Naive thymus-derived CD4-positive, alpha-beta T cell (primary cell): ENCODE measurements at regions of chr19 and their contacts with region 1.

Region 1: GRCh38 chr19:49640113-49640898 is at the start of gene RRAS:
- DNase-seq: peak; percentile 91 to 100 (median 99)
- ATAC-seq: peak; percentile 78
- H3K4me3 ChIP-seq: peak within 1 kb of the TSS; percentile 64
- H3K4me3 Mint-ChIP-seq: peak within 1 kb of the TSS; percentile 86 to 98 (median 93)
- H3K27ac ChIP-seq: peak within 1 kb of the TSS; percentile 95
- H3K27ac Mint-ChIP-seq: peak within 1 kb of the TSS; percentile 93 to 99 (median 99)
- H3K4me1 ChIP-seq: peaks cover 27 to 40% of the 10 kb centered on the region in 2 donors
- H3K4me1 Mint-ChIP-seq: peaks cover 57 to 67% (median 63%) of the 10 kb centered on the region in 7 donors
- H3K27me3 ChIP-seq: no peaks in the 10 kb centered on the region
- H3K27me3 Mint-ChIP-seq: peaks cover 0 to 6% (median 0%) of the 10 kb centered on the region in 5 donors
- total RNA-seq, gene RRAS: 11.0 to 18.6 (median 13.8) TPM

Region 2: GRCh38 chr19:48618916-48619691 is 1021.2 kb before region 1 on chr19 and contains the starts of genes RPL18 and SPHK2:
- CTCF ChIA-PET with region 1: no interaction called
- POLR2A ChIA-PET with region 1: no interaction called
- intact Hi-C with region 1: loop called in 1 of 2 experiments (anchors 10 kb)
- DNase-seq: peak; percentile 89 to 97 (median 95)
- ATAC-seq: peak; percentile 89
- H3K4me3 ChIP-seq: peak within 1 kb of the TSS; percentile 96
- H3K4me3 Mint-ChIP-seq: peak within 1 kb of the TSS; percentile 88 to 99 (median 96)
- H3K27ac ChIP-seq: peak within 1 kb of the TSS; percentile 95
- H3K27ac Mint-ChIP-seq: peak within 1 kb of the TSS; percentile 96 to 99 (median 98)
- H3K4me1 ChIP-seq: peaks cover 26 to 45% of the 10 kb centered on the region in 2 donors
- H3K4me1 Mint-ChIP-seq: peaks cover 40 to 64% (median 54%) of the 10 kb centered on the region in 7 donors
- H3K27me3 ChIP-seq: no peaks in the 10 kb centered on the region
- H3K27me3 Mint-ChIP-seq: no peaks in the 10 kb centered on the region
- total RNA-seq, gene RPL18: 1,570 to 2,826 (median 2,745) TPM
- total RNA-seq, gene SPHK2: 20.1 to 34.7 (median 30.5) TPM

Region 3: GRCh38 chr19:49287141-49287770 is 353.1 kb before region 1 on chr19:
- CTCF ChIA-PET with region 1: no interaction called
- POLR2A ChIA-PET with region 1: no interaction called
- intact Hi-C with region 1: no loop called
- DNase-seq: no peak
- ATAC-seq: no peak
- H3K4me3 ChIP-seq: no peak overlapping the region
- H3K4me3 Mint-ChIP-seq: no peak overlapping the region
- H3K27ac ChIP-seq: no peak overlapping the region
- H3K27ac Mint-ChIP-seq: no peak overlapping the region
- H3K4me1 ChIP-seq: no peaks in the 10 kb centered on the region
- H3K4me1 Mint-ChIP-seq: peaks cover 0 to 2% (median 0%) of the 10 kb centered on the region in 7 donors
- H3K27me3 ChIP-seq: no peaks in the 10 kb centered on the region
- H3K27me3 Mint-ChIP-seq: peaks cover 0 to 4% (median 4%) of the 10 kb centered on the region in 5 donors

Region 4: GRCh38 chr19:49497047-49497788 is 143.1 kb before region 1 on chr19:
- CTCF ChIA-PET with region 1: no interaction called
- POLR2A ChIA-PET with region 1: interaction called, 16 read pairs
- intact Hi-C with region 1: loop called in 1 of 2 experiments (anchors 1 kb)
- DNase-seq: peak; percentile 55 to 85 (median 77)
- ATAC-seq: peak; percentile 20
- H3K4me3 ChIP-seq: peak overlapping the region; percentile 97
- H3K4me3 Mint-ChIP-seq: peak overlapping the region; percentile 96 to 100 (median 99)
- H3K27ac ChIP-seq: peak overlapping the region; percentile 99
- H3K27ac Mint-ChIP-seq: peak overlapping the region; percentile 91 to 100 (median 98)
- H3K4me1 ChIP-seq: peaks cover 21 to 40% of the 10 kb centered on the region in 2 donors
- H3K4me1 Mint-ChIP-seq: peaks cover 32 to 64% (median 50%) of the 10 kb centered on the region in 7 donors
- H3K27me3 ChIP-seq: no peaks in the 10 kb centered on the region
- H3K27me3 Mint-ChIP-seq: peaks cover 0 to 12% (median 0%) of the 10 kb centered on the region in 5 donors

Region 5: GRCh38 chr19:49665351-49666119 is 25.2 kb after region 1 on chr19 and contains the starts of genes BCL2L12 and IRF3:
- CTCF ChIA-PET with region 1: interaction called, 8 read pairs
- POLR2A ChIA-PET with region 1: interaction called, 187 read pairs
- intact Hi-C with region 1: loop called (anchors 1 kb)
- DNase-seq: peak; percentile 99
- ATAC-seq: peak; percentile 90
- H3K4me3 ChIP-seq: peak within 1 kb of the TSS; percentile 95
- H3K4me3 Mint-ChIP-seq: peak within 1 kb of the TSS; percentile 97 to 100 (median 99)
- H3K27ac ChIP-seq: peak within 1 kb of the TSS; percentile 80
- H3K27ac Mint-ChIP-seq: peak within 1 kb of the TSS; percentile 96 to 99 (median 97)
- H3K4me1 ChIP-seq: peaks cover 23% of the 10 kb centered on the region in 2 donors
- H3K4me1 Mint-ChIP-seq: peaks cover 24 to 47% (median 39%) of the 10 kb centered on the region in 7 donors
- H3K27me3 ChIP-seq: no peaks in the 10 kb centered on the region
- H3K27me3 Mint-ChIP-seq: peaks cover 0 to 2% (median 0%) of the 10 kb centered on the region in 5 donors
- total RNA-seq, gene BCL2L12: 11.3 to 57.2 (median 22.6) TPM
- total RNA-seq, gene IRF3: 176 to 346 (median 212) TPM

Region 6: GRCh38 chr19:49817964-49818648 is 177.8 kb after region 1 on chr19 and contains the start of gene MED25:
- CTCF ChIA-PET with region 1: no interaction called
- POLR2A ChIA-PET with region 1: no interaction called
- intact Hi-C with region 1: loop called (anchors 1 to 2 kb)
- DNase-seq: peak; percentile 87 to 96 (median 94)
- ATAC-seq: peak; percentile 65
- H3K4me3 ChIP-seq: peak within 1 kb of the TSS; percentile 91
- H3K4me3 Mint-ChIP-seq: peak within 1 kb of the TSS; percentile 94 to 100 (median 98)
- H3K27ac ChIP-seq: peak within 1 kb of the TSS; percentile 88
- H3K27ac Mint-ChIP-seq: peak within 1 kb of the TSS; percentile 96 to 100 (median 100)
- H3K4me1 ChIP-seq: peaks cover 11 to 17% of the 10 kb centered on the region in 2 donors
- H3K4me1 Mint-ChIP-seq: peaks cover 20 to 51% (median 39%) of the 10 kb centered on the region in 7 donors
- H3K27me3 ChIP-seq: no peaks in the 10 kb centered on the region
- H3K27me3 Mint-ChIP-seq: no peaks in the 10 kb centered on the region
- total RNA-seq, gene MED25: 36.8 to 75.2 (median 55.4) TPM

Region 7: GRCh38 chr19:50376166-50377050 is 736.1 kb after region 1 on chr19 and contains the start of gene NR1H2:
- CTCF ChIA-PET with region 1: no interaction called
- POLR2A ChIA-PET with region 1: no interaction called
- intact Hi-C with region 1: loop called in 1 of 2 experiments (anchors 5 kb)
- DNase-seq: peak; percentile 89 to 97 (median 95)
- ATAC-seq: peak; percentile 94
- H3K4me3 ChIP-seq: peak within 1 kb of the TSS; percentile 99
- H3K4me3 Mint-ChIP-seq: peak within 1 kb of the TSS; percentile 92 to 100 (median 98)
- H3K27ac ChIP-seq: peak within 1 kb of the TSS; percentile 100
- H3K27ac Mint-ChIP-seq: peak within 1 kb of the TSS; percentile 99 to 100 (median 100)
- H3K4me1 ChIP-seq: peaks cover 4 to 10% of the 10 kb centered on the region in 2 donors
- H3K4me1 Mint-ChIP-seq: peaks cover 12 to 37% (median 24%) of the 10 kb centered on the region in 7 donors
- H3K27me3 ChIP-seq: no peaks in the 10 kb centered on the region
- H3K27me3 Mint-ChIP-seq: no peaks in the 10 kb centered on the region
- total RNA-seq, gene NR1H2: 66.6 to 284 (median 114) TPM